Gastrocnemius medialis (tissue), 4 donors: ENCODE measurements at regions of chr3 and their contacts with region 1.

Region 1: GRCh38 chr3:52851348-52851747 is 16.5 kb upstream of the MUSTN1 start:
- DNase-seq: peak in 1 of 2 donors; percentile 58
- ATAC-seq: peak; percentile 28 to 31
- H3K4me3 ChIP-seq: no peak overlapping the region
- H3K27ac ChIP-seq: peak overlapping the region; percentile 39 to 98 (median 96)
- H3K4me1 ChIP-seq: peaks cover 30 to 33% of the 10 kb centered on the region in 2 donors
- H3K27me3 ChIP-seq: no peaks in the 10 kb centered on the region
- CTCF ChIP-seq: peak; percentile 60 to 85 (median 71)
- POLR2A ChIP-seq: no peak

Region 2: DNA sequence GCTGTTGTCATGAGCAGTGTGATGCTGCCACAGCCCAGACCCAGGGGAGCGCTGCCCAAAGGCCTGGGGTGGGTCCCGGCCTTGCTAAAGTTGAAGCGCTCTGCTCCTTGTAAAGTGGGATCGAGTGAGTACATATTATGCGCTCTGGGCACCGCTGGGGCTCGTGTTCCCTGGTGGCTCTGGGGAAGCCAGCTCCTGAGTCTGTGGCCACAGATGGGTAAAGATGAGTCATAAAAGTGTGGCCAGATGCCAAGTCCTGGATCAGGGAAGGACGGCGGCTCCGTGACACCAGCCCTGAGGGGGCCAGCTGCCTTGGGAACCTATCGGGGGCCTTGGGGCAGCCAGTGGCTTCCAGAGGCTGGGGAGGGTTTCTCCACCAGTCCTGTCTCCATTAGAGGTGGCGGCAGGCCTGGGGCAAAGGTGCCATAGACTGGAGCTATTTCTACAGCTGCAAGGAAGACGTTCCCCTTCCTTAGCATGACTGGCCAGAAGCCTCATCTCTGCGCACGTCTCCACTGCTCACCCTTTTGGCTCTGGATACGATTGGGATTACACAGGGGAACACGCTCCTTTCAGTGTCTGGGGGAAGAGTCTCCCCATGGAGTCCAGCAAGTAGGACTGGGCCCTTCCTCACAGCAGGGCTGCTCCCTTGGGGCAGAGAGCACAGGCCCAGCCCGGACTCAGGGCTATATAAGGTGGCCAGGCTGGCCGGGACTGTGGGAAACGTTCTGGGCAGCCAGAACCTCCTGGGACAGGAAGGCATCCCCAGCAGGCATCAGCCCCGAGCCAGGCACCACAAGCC is 19.6 kb before region 1 on chr3:
- in situ Hi-C with region 1: no loop called
- intact Hi-C with region 1: no loop called
- DNase-seq: peak; percentile 90 to 95
- ATAC-seq: peak; percentile 51 to 53
- H3K4me3 ChIP-seq: peak overlapping the region in 3 of 4 donors; percentile 3 to 36 (median 15)
- H3K27ac ChIP-seq: peak overlapping the region; percentile 96 to 98 (median 97)
- H3K4me1 ChIP-seq: peaks cover 60 to 66% of the 10 kb centered on the region in 2 donors
- H3K27me3 ChIP-seq: no peaks in the 10 kb centered on the region
- CTCF ChIP-seq: no peak
- POLR2A ChIP-seq: peak; percentile 54 to 66

Region 3: GRCh38 chr3:52891615-52892081 is 40.3 kb after region 1 on chr3:
- in situ Hi-C with region 1: no loop called
- intact Hi-C with region 1: loop called (anchors 1 kb)
- DNase-seq: no peak
- ATAC-seq: no peak
- H3K4me3 ChIP-seq: no peak overlapping the region
- H3K27ac ChIP-seq: peak overlapping the region; percentile 77 to 85 (median 82)
- H3K4me1 ChIP-seq: peaks cover 52 to 54% of the 10 kb centered on the region in 2 donors
- H3K27me3 ChIP-seq: no peaks in the 10 kb centered on the region
- CTCF ChIP-seq: no peak
- POLR2A ChIP-seq: no peak

Region 4: DNA sequence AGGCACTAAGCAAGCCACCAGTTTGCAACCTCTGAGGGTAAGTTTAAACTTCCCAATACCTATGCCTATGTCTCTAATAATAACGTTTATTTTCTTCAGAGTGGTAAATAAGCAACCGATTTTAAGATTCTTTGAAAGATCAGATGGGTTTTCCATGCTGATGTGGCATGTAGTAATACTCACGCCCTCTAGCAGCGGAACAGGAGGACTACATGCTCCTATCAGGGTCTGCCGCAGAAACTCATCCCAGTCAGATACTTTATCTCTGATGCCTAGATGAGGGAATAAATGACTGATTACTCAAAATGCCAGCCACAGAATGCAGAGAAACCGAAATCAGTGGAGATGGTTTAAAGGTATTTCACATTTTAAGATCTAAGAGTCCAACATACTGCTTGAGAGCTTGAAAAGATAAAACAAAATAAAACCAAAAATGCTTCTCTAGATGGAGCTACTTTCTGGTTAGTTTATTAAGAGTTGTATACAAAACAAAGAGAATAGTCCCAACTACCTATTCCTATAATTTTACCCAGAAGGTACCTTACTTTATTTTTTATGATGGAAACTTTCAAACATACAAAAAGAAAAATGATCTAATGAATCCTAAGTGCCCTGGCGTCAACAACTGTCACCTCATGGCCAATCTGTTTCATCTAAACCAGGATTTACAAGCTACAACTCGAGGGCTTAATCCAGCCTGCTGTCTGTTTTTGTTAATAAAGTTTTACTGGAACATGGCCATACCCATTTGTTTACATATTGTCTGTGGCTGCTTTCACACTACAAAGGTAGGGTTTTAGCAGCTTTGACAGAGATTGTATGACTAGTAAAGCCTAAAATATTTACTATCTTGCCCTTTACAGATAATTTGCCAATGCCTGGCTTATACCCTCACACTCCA is 83.5 kb after region 1 on chr3:
- in situ Hi-C with region 1: loop called in 1 of 4 experiments (anchors 10 kb)
- intact Hi-C with region 1: loop called (anchors 2 kb)
- DNase-seq: peak; percentile 31 to 35
- ATAC-seq: peak; percentile 84 to 94
- H3K4me3 ChIP-seq: no peak overlapping the region
- H3K27ac ChIP-seq: no peak overlapping the region
- H3K4me1 ChIP-seq: no peaks in the 10 kb centered on the region
- H3K27me3 ChIP-seq: no peaks in the 10 kb centered on the region
- CTCF ChIP-seq: peak; percentile 55 to 81 (median 68)
- POLR2A ChIP-seq: no peak

Region 5: GRCh38 chr3:52986938-52987337 is 135.6 kb after region 1 on chr3:
- in situ Hi-C with region 1: no loop called
- intact Hi-C with region 1: loop called (anchors 1 kb)
- DNase-seq: no peak
- ATAC-seq: peak; percentile 58 to 71
- H3K4me3 ChIP-seq: no peak overlapping the region
- H3K27ac ChIP-seq: no peak overlapping the region
- H3K4me1 ChIP-seq: peaks cover 6 to 26% of the 10 kb centered on the region in 2 donors
- H3K27me3 ChIP-seq: no peaks in the 10 kb centered on the region
- CTCF ChIP-seq: peak in 3 of 5 experiments; percentile 37 to 47 (median 38)
- POLR2A ChIP-seq: no peak

Region 6: GRCh38 chr3:53045518-53046170 is 194.3 kb after region 1 on chr3 and contains the start of gene SFMBT1:
- in situ Hi-C with region 1: loop called in 1 of 4 experiments (anchors 25 kb)
- intact Hi-C with region 1: loop called (anchors 2 kb)
- DNase-seq: peak; percentile 36 to 55
- ATAC-seq: peak; percentile 77 to 82
- H3K4me3 ChIP-seq: peak within 1 kb of the TSS; percentile 81 to 94 (median 90)
- H3K27ac ChIP-seq: peak within 1 kb of the TSS; percentile 90 to 98 (median 95)
- H3K4me1 ChIP-seq: peaks cover 10 to 12% of the 10 kb centered on the region in 2 donors
- H3K27me3 ChIP-seq: no peaks in the 10 kb centered on the region
- CTCF ChIP-seq: no peak
- POLR2A ChIP-seq: peak; percentile 69 to 72
- total RNA-seq, gene SFMBT1: 17.5 to 39.7 (median 29.8) TPM

Region 7: GRCh38 chr3:53072653-53073552 is 221.6 kb after region 1 on chr3:
- in situ Hi-C with region 1: loop called in 3 of 4 experiments (anchors 10 to 25 kb)
- intact Hi-C with region 1: loop called (anchors 1 kb)
- DNase-seq: peak; percentile 50 to 70
- ATAC-seq: peak; percentile 86 to 93
- H3K4me3 ChIP-seq: peak overlapping the region; percentile 63 to 91 (median 70)
- H3K27ac ChIP-seq: peak overlapping the region; percentile 51 to 80 (median 64)
- H3K4me1 ChIP-seq: peaks cover 8 to 9% of the 10 kb centered on the region in 2 donors
- H3K27me3 ChIP-seq: no peaks in the 10 kb centered on the region
- CTCF ChIP-seq: peak; percentile 86 to 95 (median 93)
- POLR2A ChIP-seq: no peak